Colonic mucosa (tissue), 4 donors: ENCODE measurements at regions of chr21 and their contacts with region 1.

Region 1: DNA sequence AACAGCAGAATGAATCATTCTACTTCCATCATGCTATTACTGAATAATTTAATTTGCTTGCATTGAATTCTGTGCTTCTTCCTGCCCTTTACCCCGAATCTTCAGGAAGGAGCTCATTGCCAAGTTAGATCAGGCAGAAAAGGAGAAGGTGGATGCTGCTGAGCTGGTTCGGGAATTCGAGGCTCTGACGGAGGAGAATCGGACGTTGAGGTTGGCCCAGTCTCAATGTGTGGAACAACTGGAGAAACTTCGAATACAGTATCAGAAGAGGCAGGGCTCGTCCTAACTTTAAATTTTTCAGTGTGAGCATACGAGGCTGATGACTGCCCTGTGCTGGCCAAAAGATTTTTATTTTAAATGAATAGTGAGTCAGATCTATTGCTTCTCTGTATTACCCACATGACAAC is 44.2 kb downstream of the MAP3K7CL start:
- DNase-seq: no peak
- H3K4me3 ChIP-seq: no peak overlapping the region
- H3K27ac ChIP-seq: no peak overlapping the region
- H3K4me1 ChIP-seq: peaks cover 8% of the 10 kb centered on the region
- H3K27me3 ChIP-seq: no peaks in the 10 kb centered on the region
- CTCF ChIP-seq: no peak

Region 2: GRCh38 chr21:29299916-29300806 is 125.6 kb after region 1 on chr21:
- intact Hi-C with region 1: loop called (anchors 5 kb)
- DNase-seq: peak; percentile 60
- H3K4me3 ChIP-seq: peak overlapping the region; percentile 63
- H3K27ac ChIP-seq: peak overlapping the region; percentile 90
- H3K4me1 ChIP-seq: peaks cover 15% of the 10 kb centered on the region
- H3K27me3 ChIP-seq: no peaks in the 10 kb centered on the region
- CTCF ChIP-seq: no peak

Region 3: GRCh38 chr21:29462479-29462878 is 287.9 kb after region 1 on chr21:
- intact Hi-C with region 1: no loop called
- DNase-seq: no peak
- H3K4me3 ChIP-seq: no peak overlapping the region
- H3K27ac ChIP-seq: no peak overlapping the region
- H3K4me1 ChIP-seq: no peaks in the 10 kb centered on the region
- H3K27me3 ChIP-seq: no peaks in the 10 kb centered on the region
- CTCF ChIP-seq: no peak